Left cardiac atrium (tissue), 4 donors: ENCODE measurements at regions of chr1 and their contacts with region 1.

Region 1: GRCh38 chr1:119367427-119368124 is 1.0 kb upstream of the HAO2 start:
- DNase-seq: no peak
- ATAC-seq: peak; percentile 49 to 50

Region 2: GRCh38 chr1:118151312-118151937 is 1216.2 kb before region 1 on chr1:
- intact Hi-C with region 1: loop called in 1 of 2 experiments (anchors 2 kb)
- DNase-seq: peak; percentile 48
- ATAC-seq: no peak

Region 3: DNA sequence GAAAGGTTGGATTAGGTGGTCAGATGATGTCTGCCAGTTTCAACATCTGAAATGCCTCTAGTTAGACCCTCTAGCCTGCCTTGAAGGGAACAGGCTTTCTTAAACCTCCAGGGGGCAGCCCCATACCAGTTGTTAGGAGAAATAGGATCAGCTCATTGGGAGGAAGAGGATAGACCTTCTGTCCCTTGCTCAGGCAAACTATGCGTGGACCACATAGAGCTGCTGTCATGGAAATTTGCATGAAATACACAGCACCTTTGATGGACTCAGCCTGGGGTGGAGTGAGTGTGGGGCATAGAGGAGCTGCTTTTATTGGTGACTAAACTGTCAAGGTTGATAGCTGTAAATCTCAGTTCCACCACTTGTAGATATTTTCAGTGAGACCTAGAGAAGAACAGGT is 1144.2 kb before region 1 on chr1:
- intact Hi-C with region 1: loop called in 1 of 2 experiments (anchors 10 kb)
- DNase-seq: no peak
- ATAC-seq: peak in 1 of 2 donors; percentile 55

Region 4: GRCh38 chr1:119275145-119276134 is 92.1 kb before region 1 on chr1:
- intact Hi-C with region 1: loop called in 1 of 2 experiments (anchors 5 kb)
- DNase-seq: no peak
- ATAC-seq: peak; percentile 60 to 81

Region 5: GRCh38 chr1:119351997-119352396 is 15.6 kb before region 1 on chr1:
- intact Hi-C with region 1: loop called in 1 of 2 experiments (anchors 2 kb)
- DNase-seq: no peak
- ATAC-seq: no peak